Activated T-helper 2 cell treated with anti-CD3 and anti-CD28 coated beads, Interferon-gamma antibody, Interleukin-2, Interleukin-4, amounts not matched to agents 10 μg/mL and 5 μg/mL and 100 μg/mL, durations not matched to agents 14 hours and 24 hours and 36 hours (primary cell): ENCODE measurements at regions of chr5 and their contacts with region 1.

Region 1: DNA sequence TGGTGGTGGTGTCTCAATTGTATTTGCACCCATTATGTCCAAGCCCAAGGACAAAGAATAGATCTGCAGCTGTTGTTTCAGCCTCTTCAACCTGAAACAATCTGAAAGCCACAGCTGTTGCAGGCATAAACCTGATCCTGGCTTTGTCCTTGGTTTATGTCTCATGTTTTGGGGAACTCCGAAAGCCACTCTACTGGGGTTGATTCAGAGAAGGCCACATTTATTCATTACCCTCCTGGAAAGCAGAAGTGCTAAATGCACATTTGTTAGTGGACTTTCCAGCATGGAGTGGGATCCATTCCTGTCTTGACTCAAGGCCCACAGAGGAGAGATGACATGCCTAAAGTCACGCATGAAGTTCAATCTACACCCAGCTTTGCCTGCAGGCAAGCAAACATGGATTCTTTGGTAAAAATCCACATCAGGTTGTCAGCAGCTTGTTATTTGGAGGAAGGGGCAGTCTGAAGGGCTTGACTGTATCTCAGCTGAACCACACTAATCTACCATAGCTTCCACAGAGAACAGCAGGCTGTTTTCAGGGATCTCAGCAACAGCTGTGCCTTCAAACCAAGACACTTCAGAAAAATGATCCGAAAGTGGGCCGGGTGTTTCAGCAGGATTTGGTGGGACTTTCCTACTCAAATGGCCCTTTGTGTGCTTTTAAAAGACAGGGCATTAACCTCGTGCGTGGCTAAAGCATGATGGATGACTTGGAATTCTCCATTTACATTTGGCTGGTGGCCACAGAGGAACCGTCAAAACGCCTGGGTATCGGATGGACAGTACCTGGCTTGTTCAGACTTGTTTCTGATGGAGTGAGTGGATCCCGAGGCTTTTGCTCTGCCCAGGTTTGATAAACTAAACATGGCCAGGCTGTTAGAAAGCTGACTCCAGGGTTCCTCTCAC is 36.2 kb upstream of the ADAM19 start:
- DNase-seq: no peak
- H3K4me3 Mint-ChIP-seq: no peak overlapping the region
- H3K27ac Mint-ChIP-seq: peak overlapping the region; percentile 40
- H3K4me1 Mint-ChIP-seq: peaks cover 55% of the 10 kb centered on the region
- H3K27me3 Mint-ChIP-seq: no peaks in the 10 kb centered on the region

Region 2: GRCh38 chr5:157651623-157652549 is 40.1 kb after region 1 on chr5 and contains the start of gene SOX30:
- intact Hi-C with region 1: loop called (anchors 5 kb)
- DNase-seq: peak; percentile 70
- H3K4me3 Mint-ChIP-seq: peak within 1 kb of the TSS; percentile 65
- H3K27ac Mint-ChIP-seq: peak within 1 kb of the TSS; percentile 68
- H3K4me1 Mint-ChIP-seq: peaks cover 19% of the 10 kb centered on the region
- H3K27me3 Mint-ChIP-seq: no peaks in the 10 kb centered on the region
- total RNA-seq, gene SOX30: 0.11 TPM in 2 replicates